ENCODE measurements at regions of chr4 and their contacts with region 1.

Region 1: GRCh38 chr4:10554694-10555093 is 97.5 kb upstream of the ZNF518B start:
- DNase-seq: no peak
- H3K4me3 ChIP-seq: no peak overlapping the region
- CTCF ChIP-seq: peak; percentile 80

Region 2: GRCh38 chr4:10151182-10151581 is 403.5 kb before region 1 on chr4:
- CTCF ChIA-PET with region 1: interaction called, 10 read pairs
- POLR2A ChIA-PET with region 1: no interaction called
- DNase-seq: no peak
- H3K4me3 ChIP-seq: no peak overlapping the region
- CTCF ChIP-seq: no peak

Region 3: DNA sequence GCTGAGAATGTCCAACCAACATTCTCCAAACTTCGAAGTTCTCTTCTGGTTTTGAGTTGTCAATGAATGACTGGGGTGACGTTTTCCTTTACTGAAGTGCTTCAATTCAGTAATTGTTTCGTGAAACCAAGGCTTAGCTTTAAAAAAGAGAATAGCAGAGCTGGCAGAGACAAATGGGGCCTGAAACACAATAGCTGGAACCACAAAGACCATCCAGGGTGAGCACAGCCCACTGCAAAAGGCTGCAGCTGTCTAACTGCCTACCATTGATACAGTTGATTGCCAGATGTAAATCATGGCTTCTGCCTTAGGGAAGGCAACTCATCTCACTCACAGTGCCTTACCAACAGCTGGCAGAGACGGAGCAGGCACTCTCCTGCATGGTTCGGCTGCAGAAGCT is 18.8 kb before region 1 on chr4:
- CTCF ChIA-PET with region 1: interaction called, 22 read pairs
- POLR2A ChIA-PET with region 1: no interaction called
- DNase-seq: no peak
- H3K4me3 ChIP-seq: no peak overlapping the region
- CTCF ChIP-seq: no peak

Measured in AG04449 (cell line).